ENCODE measurements at regions of chr7 and their contacts with region 1.

Region 1: DNA sequence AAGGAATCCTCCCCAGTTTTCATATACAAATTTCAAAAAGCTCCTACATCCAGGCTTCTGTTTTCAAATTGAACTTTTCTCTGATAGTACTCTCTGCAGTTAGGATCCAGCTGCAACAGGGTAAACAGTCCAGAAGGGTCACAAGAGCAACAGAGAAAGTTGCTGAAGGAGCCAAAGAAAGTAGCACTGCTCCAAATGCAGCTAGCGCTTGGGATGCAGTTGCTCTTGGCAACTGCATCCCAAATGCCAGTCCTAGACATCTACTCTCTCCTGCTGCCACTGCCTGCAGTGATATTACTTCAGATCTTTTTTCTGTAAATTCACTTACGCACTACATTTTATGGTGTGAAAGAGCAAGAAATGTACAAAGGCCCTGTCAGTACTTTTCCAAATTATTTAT is 14.6 kb downstream of the GPR37 start:
- DNase-seq: no peak
- H3K4me3 ChIP-seq: no peak overlapping the region
- H3K27ac ChIP-seq: no peak overlapping the region
- H3K4me1 ChIP-seq: no peaks in the 10 kb centered on the region
- H3K27me3 ChIP-seq: no peaks in the 10 kb centered on the region
- CTCF ChIP-seq: no peak
- POLR2A ChIP-seq: no peak

Region 2: GRCh38 chr7:124674451-124674850 is 76.6 kb before region 1 on chr7:
- intact Hi-C with region 1: loop called (anchors 2 kb)
- DNase-seq: no peak
- H3K4me3 ChIP-seq: no peak overlapping the region
- H3K27ac ChIP-seq: no peak overlapping the region
- H3K4me1 ChIP-seq: no peaks in the 10 kb centered on the region
- H3K27me3 ChIP-seq: no peaks in the 10 kb centered on the region
- CTCF ChIP-seq: no peak
- POLR2A ChIP-seq: no peak